Activated CD4-positive, alpha-beta memory T cell treated with anti-CD3 and anti-CD28 coated beads for 36 hours (primary cell): ENCODE measurements at regions of chr13 and their contacts with region 1.

Region 1: DNA sequence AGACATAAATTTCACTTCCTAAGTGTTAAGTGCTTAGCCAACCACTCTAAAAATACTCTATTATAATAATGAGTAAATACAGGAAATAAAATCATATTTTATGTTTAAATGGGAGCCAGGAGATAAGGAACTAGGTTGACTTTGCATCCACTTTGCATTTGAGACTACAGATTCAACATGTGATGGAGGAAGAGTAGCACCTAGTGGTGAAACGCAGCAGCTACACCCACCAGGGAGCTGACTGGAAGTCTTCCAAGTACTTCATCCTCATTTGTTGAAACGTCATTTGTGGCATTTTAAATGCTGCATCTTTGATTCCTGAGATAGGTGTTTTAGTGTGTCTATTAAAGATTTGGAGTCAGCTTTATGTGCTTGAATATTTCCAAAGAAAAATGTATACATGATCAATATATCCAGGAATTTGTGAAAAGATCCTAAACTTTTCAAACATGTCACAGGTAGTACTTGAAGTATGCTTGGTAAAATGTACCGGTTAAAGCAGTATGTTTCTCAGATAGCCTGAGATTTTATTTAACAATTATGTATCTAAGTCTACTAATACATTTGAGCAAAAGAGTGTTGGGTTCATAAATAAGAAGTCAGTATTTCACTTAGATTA is 17.4 kb upstream of the KCTD12 start:
- DNase-seq: peak; percentile 77
- H3K4me3 Mint-ChIP-seq: no peak overlapping the region
- H3K27ac Mint-ChIP-seq: no peak overlapping the region
- H3K4me1 Mint-ChIP-seq: no peaks in the 10 kb centered on the region
- H3K27me3 Mint-ChIP-seq: peaks cover 8% of the 10 kb centered on the region

Region 2: DNA sequence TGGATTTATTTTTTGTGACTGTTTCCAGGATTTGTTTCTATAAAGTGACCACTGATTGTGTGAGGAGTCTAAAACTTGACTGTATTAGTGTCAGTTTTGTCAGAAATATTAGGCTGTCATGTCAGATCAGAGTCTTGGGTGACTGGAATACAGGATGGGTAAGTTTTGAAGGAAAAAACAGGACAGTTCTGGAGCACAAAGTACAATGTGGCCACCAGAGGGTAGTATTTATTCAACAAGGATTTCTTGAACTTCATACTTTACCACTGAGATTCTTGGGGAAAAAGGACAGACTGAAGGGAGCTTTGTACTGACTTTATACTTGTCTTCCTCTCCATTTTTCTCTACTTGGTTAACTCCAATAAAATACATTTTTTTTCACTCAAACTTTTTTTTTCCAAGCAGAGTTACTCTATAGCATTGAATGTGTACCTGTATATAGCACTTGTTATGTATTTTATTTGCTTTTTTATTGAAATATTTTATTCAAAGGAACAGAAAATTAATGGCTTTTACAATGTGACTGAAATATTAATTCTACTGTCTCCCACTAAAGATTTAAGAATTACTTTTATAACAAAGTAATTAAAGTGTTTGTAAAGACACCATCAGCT is 1216.4 kb before region 1 on chr13:
- CTCF ChIA-PET with region 1: interaction called, 3 read pairs
- POLR2A ChIA-PET with region 1: no interaction called
- intact Hi-C with region 1: loop called (anchors 10 kb)
- DNase-seq: no peak
- H3K4me3 Mint-ChIP-seq: no peak overlapping the region
- H3K27ac Mint-ChIP-seq: no peak overlapping the region
- H3K4me1 Mint-ChIP-seq: peaks cover 14% of the 10 kb centered on the region
- H3K27me3 Mint-ChIP-seq: no peaks in the 10 kb centered on the region

Region 3: GRCh38 chr13:75876360-75877050 is 1027.1 kb before region 1 on chr13:
- CTCF ChIA-PET with region 1: interaction called, 12 read pairs
- POLR2A ChIA-PET with region 1: no interaction called
- intact Hi-C with region 1: loop called (anchors 1 kb)
- DNase-seq: peak; percentile 66
- H3K4me3 Mint-ChIP-seq: no peak overlapping the region
- H3K27ac Mint-ChIP-seq: no peak overlapping the region
- H3K4me1 Mint-ChIP-seq: peaks cover 10% of the 10 kb centered on the region
- H3K27me3 Mint-ChIP-seq: no peaks in the 10 kb centered on the region

Region 4: DNA sequence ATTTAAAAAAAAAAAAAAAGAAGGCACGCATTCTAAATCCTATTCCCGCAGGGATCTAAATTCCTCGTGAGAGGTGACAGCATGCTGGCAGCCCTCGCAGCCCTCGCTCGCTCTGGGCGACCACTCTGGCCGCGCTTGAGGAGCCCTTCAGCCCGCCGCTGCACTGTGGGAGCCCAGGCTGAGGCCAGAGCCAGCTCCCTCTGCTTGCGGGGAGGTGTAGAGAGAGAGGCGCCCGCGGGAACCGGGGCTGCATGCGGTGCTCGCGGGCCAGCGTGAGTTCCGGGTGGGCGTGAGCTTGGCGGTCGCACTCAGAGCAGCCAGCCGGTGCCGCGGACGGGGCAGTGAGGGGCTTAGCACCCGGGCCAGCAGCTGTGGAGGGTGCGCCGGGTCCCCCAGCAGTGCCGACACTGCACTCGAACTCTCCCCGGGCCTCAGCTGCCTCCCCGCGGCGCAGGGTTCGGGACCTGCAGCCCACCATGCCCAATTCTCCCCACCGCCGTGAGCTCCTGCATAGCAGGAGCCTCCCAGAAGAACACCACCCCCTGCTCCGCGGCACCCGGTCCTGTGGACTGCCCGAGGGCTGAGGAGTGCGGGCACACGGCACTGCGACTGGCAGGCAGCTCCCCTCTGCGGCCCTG is 713.7 kb before region 1 on chr13:
- CTCF ChIA-PET with region 1: no interaction called
- POLR2A ChIA-PET with region 1: no interaction called
- intact Hi-C with region 1: no loop called
- DNase-seq: no peak
- H3K4me3 Mint-ChIP-seq: no peak overlapping the region
- H3K27ac Mint-ChIP-seq: no peak overlapping the region
- H3K4me1 Mint-ChIP-seq: no peaks in the 10 kb centered on the region
- H3K27me3 Mint-ChIP-seq: no peaks in the 10 kb centered on the region

Region 5: DNA sequence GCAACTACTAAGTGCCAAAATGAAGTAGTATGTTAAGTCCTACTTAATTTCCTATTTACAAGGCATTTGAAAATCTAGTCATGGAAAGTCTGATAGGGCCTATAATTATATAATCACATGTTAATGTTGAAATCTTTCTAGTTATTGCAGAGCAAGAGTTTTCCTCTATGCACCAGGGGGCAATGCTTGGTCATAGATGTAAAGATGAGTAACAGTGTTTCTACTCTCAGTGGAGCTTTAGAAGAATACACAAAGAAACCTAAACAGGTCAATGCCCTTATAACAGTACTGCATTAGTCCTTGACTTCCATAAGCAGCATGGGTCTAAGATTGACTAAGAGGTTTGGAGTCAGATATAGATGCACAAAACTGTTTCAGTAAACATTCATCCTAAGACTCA is 236.1 kb before region 1 on chr13:
- CTCF ChIA-PET with region 1: interaction called, 8 read pairs
- POLR2A ChIA-PET with region 1: no interaction called
- intact Hi-C with region 1: loop called (anchors 1 kb)
- DNase-seq: no peak
- H3K4me3 Mint-ChIP-seq: no peak overlapping the region
- H3K27ac Mint-ChIP-seq: no peak overlapping the region
- H3K4me1 Mint-ChIP-seq: no peaks in the 10 kb centered on the region
- H3K27me3 Mint-ChIP-seq: no peaks in the 10 kb centered on the region

Region 6: DNA sequence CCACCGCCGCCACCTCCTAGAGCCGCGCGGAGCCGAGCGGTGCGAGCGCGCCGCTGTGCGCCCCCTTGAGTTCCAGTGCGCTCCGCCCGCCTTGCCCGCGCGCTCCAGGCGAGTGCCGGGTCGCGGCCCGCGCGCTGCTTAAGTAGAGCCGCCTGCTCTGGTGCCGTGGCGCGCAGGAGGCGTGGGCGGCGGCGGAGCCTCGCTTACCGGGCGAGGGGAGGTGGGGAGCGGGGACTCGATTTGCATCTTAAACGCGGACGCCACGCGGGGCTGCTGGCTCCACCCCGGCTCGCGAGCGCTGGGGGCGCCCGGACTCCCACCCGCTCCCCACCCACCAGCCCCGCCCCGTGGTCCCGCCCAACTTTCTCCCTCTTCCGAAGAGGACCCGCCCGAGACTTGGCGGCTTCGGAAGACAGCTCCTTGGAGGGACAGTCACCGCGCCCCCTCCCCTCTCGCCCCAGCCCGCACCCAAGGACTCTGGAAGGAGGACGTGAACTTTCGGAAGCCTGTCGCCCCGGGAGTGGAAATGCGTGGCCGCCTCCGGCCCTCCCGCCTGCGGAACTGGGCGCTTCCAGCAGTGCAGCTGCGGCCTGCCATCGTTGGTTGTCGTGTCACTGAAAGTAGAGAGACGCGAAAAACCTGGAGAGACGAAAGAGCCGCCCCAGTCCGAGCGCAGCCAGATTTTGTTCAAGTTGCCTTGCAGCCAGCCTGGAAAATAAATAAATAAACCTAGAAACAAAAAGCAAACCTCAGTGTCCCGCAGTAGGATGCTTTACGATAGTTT is 17.2 kb before region 1 on chr13 and contains the start of gene KCTD12:
- CTCF ChIA-PET with region 1: interaction called, 24 read pairs
- POLR2A ChIA-PET with region 1: no interaction called
- intact Hi-C with region 1: no loop called
- DNase-seq: peak; percentile 77
- H3K4me3 Mint-ChIP-seq: peak within 1 kb of the TSS; percentile 84
- H3K27ac Mint-ChIP-seq: peak within 1 kb of the TSS; percentile 50
- H3K4me1 Mint-ChIP-seq: peaks cover 30% of the 10 kb centered on the region
- H3K27me3 Mint-ChIP-seq: peaks cover 12% of the 10 kb centered on the region
- total RNA-seq, gene KCTD12: 6.1 to 6.7 TPM